ENCODE measurements at regions of chr10 and their contacts with region 1.

Region 1: DNA sequence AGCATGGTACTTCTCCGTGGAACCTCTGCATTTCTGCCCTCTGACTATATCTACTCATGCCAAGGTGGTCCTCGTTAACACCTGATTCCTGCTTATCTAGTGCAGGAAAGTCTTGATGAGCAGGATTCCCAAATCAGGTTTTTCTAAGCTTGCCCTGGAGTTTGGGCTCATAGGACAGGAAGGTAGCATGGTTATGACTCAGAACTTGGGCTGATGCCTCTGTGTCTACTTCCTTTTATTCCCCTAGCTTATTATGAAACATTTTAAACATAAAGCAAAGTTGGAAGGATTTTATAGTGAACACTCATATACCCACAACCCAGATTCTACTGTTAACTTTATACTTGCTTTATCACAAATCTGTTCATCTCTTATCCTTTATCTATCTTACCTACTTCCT is 5.6 kb downstream of the SUFU start:
- H3K4me3 Mint-ChIP-seq: no peak overlapping the region
- H3K27ac Mint-ChIP-seq: peak overlapping the region; percentile 60
- H3K4me1 Mint-ChIP-seq: peaks cover 61% of the 10 kb centered on the region
- H3K27me3 Mint-ChIP-seq: no peaks in the 10 kb centered on the region

Region 2: DNA sequence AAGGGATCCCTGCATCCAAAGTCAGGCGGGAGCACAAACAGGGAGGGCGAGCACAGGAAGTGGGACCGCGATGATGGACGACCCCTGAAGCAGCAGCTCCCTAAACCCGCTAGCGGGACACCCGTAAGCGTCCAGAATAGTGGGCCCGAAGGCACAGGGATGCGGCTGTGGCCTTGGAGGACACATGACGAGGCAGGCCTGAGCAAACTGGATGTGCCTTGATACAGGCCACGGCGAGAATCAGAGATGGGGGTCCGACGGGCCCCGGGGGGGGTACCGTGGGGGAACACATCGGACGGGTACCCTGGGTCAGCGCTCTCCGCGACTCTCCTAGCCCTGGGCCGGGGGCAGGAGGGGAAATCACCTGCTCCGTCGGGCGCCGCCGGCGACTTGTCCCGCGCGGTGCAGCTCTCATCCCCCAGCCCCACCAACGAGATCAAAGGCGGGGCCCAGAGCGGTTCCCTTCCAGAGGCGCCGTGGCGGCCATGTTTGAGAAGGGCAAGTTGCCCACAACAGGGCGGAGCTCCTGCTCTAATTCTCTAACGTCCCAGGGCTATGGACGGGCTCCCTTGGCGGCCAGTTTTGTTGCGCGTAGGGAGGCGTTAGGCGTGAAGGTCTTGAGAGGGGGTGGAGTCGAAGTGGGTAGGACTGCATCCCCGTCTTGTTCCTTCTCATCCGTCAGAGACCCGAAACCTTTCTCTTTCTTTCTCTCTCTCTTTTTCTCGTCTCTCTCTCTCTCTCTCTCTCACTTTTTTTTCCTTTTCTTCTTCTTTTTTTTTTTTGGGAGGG is 77.0 kb before region 1 on chr10 and contains the start of gene CUEDC2:
- intact Hi-C with region 1: no loop called
- H3K4me3 Mint-ChIP-seq: peak within 1 kb of the TSS; percentile 92
- H3K27ac Mint-ChIP-seq: peak within 1 kb of the TSS; percentile 87
- H3K4me1 Mint-ChIP-seq: peaks cover 57% of the 10 kb centered on the region
- H3K27me3 Mint-ChIP-seq: no peaks in the 10 kb centered on the region

Region 3: DNA sequence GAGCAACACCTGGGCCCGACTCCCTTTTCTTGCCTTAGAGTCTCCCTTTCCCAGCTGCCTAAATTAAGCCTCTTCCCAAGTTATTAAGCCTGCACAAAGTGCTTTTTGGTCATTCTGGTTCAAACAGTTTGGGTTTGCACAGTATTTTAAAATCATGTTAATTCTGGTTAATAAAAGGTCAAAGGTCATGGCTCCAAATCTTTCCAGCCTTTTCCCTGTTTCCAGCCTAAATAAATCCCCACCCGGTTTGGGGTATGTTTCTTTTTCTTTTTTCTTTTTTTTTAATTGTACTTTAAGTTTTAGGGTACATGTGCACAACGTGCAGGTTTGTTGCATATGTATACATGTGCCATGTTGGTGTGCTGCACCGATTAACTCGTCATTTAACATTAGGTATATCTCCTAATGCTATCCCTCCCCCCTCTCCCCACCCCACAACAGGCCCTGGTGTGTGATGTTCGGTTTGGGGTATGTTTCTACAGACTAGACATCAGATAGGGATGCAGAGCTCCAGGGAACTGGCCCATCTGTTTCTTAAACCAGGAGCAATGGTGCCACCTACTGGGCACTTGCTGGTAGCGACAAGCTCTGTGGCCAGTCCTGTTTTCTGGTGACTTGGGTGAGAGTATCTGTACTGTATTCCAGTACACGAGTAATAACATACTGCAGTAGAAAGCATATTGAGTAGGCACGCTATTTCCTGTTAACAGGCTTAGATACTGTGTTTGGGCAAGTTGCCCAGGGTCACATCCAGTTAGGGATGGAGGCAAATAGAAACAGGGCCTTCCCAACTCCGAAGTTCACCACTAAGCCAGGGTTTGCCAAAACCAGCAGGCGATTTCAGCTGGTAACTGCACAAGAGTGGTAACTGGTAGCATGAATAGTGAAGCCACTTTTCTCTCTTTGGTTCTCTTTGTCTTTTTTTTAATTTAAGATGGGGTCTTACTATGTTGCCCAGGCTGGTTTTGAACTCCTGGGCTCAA is 74.3 kb after region 1 on chr10:
- intact Hi-C with region 1: loop called (anchors 2 kb)
- H3K4me3 Mint-ChIP-seq: no peak overlapping the region
- H3K27ac Mint-ChIP-seq: no peak overlapping the region
- H3K4me1 Mint-ChIP-seq: peaks cover 34% of the 10 kb centered on the region
- H3K27me3 Mint-ChIP-seq: no peaks in the 10 kb centered on the region

Region 4: DNA sequence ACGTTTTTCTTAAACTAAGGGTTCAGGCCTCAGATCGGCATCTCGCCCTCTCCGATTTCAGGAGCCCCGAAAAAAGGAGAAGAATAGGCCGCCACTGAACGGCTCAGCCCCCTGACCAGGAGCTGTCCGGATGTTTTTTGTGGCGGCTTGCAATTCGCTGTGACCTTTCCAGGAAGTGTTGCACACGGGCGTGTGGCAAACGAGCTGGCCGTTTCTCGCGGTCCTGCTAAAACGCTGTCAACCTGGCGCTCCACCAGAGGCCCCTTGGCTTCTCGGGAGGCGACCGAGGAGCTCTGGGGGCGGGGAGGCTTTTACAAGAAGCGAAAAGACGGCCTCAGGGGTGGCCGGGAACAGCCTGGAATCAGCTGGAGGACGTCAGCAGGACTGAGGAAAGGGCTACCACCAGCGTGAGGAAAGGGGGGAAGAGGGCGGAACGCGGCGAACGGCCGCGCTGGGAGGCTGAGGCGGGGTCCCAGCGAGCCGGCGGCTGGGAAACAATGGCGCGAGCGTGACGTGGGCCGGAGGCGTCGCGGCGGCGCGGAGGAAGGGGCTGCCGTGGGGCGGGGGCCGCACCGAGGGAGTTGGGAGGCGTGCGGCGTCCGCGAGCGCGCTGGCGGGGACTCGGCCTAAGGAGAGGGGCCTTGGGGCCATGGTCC is 683.2 kb after region 1 on chr10:
- intact Hi-C with region 1: no loop called
- H3K4me3 Mint-ChIP-seq: peak overlapping the region; percentile 98
- H3K27ac Mint-ChIP-seq: peak overlapping the region; percentile 100
- H3K4me1 Mint-ChIP-seq: peaks cover 56% of the 10 kb centered on the region
- H3K27me3 Mint-ChIP-seq: no peaks in the 10 kb centered on the region

Region 5: DNA sequence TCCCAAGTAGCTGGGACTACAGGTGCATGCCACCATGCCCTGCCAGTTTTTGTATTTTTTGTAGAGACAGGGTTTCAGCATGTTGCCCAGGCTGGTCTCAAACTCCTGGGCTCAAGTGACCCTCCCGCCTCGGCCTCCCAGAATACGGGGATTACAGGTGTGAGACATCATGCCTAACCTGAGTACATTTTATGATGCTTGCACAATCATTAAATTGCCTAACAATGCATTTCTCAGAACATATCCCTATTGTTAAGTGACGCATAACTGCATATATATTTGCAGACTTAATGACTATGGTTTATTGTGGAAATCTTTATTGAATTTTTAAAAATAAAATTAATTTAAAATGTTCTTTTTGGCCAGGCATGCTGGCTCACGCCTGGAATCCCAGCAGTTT is 798.2 kb after region 1 on chr10:
- intact Hi-C with region 1: no loop called
- H3K4me3 Mint-ChIP-seq: no peak overlapping the region
- H3K27ac Mint-ChIP-seq: no peak overlapping the region
- H3K4me1 Mint-ChIP-seq: no peaks in the 10 kb centered on the region
- H3K27me3 Mint-ChIP-seq: no peaks in the 10 kb centered on the region